Lower lobe of right lung (tissue), 2 donors: ENCODE measurements at regions of chr1 and their contacts with region 1.

Region 1: DNA sequence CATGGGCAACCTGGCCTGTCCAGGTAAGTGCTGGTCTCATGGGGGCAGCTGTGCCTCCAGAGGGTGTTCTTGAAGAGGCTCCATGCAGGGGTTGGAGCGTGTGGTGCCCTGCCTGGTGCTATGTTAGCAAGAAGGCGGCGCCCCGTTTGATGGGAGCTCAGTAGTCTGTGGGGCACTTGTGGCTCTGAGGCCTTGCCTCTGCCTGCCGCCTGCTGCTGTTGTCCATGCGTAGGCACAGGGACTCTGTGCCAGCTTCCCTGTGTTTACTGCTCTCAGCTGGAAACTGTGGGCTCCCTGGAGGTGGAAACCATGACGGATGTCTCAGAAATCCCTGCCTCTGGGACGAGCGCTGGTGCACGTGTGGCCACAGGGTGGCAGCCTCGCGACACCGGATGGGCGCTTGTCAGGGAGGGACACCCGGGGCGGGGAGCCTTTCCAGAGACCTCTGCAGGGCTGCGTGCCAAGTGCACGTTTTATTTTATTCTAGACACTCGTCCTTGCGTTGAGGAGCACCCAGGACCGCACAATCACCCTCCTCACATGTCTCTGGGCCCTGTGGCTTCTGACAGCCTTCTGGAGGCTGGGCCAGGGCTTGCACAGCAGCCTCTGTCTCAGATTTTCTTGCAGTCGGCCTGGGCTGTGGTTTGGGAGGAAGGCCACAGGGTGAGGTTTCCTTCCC is 27.1 kb downstream of the SNAP47 start:
- DNase-seq: peak; percentile 88
- ATAC-seq: peak; percentile 84 to 85
- H3K4me3 ChIP-seq: peak overlapping the region; percentile 18
- H3K27ac ChIP-seq: peak overlapping the region; percentile 29
- H3K4me1 ChIP-seq: peaks cover 45% of the 10 kb centered on the region
- H3K27me3 ChIP-seq: no peaks in the 10 kb centered on the region
- CTCF ChIP-seq: peak; percentile 90

Region 2: GRCh38 chr1:227934476-227935313 is 172.3 kb after region 1 on chr1:
- intact Hi-C with region 1: loop called (anchors 10 kb)
- DNase-seq: no peak
- ATAC-seq: peak; percentile 53 to 78
- H3K4me3 ChIP-seq: no peak overlapping the region
- H3K27ac ChIP-seq: peak overlapping the region; percentile 18
- H3K4me1 ChIP-seq: no peaks in the 10 kb centered on the region
- H3K27me3 ChIP-seq: no peaks in the 10 kb centered on the region
- CTCF ChIP-seq: no peak